Gastrocnemius medialis (tissue), 4 donors: ENCODE measurements at regions of chr15 and their contacts with region 1.

Region 1: GRCh38 chr15:92903941-92904831 is 4.1 kb downstream of the CHD2 start:
- DNase-seq: peak; percentile 98 to 99
- ATAC-seq: peak; percentile 80 to 83
- H3K4me3 ChIP-seq: peak overlapping the region; percentile 64 to 76 (median 71)
- H3K27ac ChIP-seq: peak overlapping the region; percentile 94 to 97 (median 96)
- H3K4me1 ChIP-seq: peaks cover 51 to 60% of the 10 kb centered on the region in 2 donors
- H3K27me3 ChIP-seq: no peaks in the 10 kb centered on the region
- CTCF ChIP-seq: no peak
- POLR2A ChIP-seq: peak; percentile 94 to 98

Region 2: GRCh38 chr15:93012786-93013185 is 108.6 kb after region 1 on chr15:
- in situ Hi-C with region 1: no loop called
- intact Hi-C with region 1: no loop called
- DNase-seq: no peak
- ATAC-seq: peak; percentile 28 to 50
- H3K4me3 ChIP-seq: no peak overlapping the region
- H3K27ac ChIP-seq: peak overlapping the region in 3 of 4 donors; percentile 20 to 57 (median 55)
- H3K4me1 ChIP-seq: no peaks in the 10 kb centered on the region
- H3K27me3 ChIP-seq: no peaks in the 10 kb centered on the region
- CTCF ChIP-seq: no peak
- POLR2A ChIP-seq: no peak

Region 3: DNA sequence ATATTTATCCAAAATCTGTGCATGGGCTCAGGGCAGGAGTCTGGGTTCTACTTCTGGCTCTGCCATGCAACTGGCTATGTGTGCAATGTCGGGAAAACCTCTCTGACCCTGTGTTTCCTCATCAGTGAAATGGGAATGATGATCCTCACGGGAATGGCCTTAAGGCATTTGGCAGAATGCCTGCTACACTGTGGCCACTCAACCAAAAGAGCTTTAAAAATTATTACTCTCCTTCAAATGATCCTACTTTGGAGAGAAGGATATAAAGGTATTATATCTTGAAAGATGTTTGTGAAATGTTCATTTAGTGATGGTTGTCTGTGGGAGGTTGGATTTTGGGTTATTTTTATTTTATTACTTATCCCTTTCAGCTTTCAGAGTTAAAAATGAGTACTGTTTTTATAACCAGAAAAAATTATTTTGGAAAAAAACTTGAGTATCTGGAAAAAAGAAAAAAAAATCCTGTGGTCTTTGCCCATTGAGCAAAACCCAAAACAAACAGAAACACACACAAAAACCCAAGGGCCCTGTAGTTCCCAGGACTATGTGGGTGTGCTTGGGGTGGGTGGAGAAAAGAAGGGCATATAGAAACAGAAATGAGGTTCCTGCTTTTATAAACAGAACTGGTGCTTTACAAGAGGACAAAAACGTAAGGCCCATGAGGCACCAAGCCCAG is 162.8 kb after region 1 on chr15:
- in situ Hi-C with region 1: no loop called
- intact Hi-C with region 1: loop called (anchors 5 kb)
- DNase-seq: peak in 1 of 2 donors; percentile 46
- ATAC-seq: no peak
- H3K4me3 ChIP-seq: peak overlapping the region in 2 of 4 donors; percentile 15 to 19
- H3K27ac ChIP-seq: peak overlapping the region; percentile 94 to 98 (median 96)
- H3K4me1 ChIP-seq: peaks cover 90 to 96% of the 10 kb centered on the region in 2 donors
- H3K27me3 ChIP-seq: no peaks in the 10 kb centered on the region
- CTCF ChIP-seq: no peak
- POLR2A ChIP-seq: no peak